ENCODE measurements at regions of chr12 and their contacts with region 1.

Region 1: DNA sequence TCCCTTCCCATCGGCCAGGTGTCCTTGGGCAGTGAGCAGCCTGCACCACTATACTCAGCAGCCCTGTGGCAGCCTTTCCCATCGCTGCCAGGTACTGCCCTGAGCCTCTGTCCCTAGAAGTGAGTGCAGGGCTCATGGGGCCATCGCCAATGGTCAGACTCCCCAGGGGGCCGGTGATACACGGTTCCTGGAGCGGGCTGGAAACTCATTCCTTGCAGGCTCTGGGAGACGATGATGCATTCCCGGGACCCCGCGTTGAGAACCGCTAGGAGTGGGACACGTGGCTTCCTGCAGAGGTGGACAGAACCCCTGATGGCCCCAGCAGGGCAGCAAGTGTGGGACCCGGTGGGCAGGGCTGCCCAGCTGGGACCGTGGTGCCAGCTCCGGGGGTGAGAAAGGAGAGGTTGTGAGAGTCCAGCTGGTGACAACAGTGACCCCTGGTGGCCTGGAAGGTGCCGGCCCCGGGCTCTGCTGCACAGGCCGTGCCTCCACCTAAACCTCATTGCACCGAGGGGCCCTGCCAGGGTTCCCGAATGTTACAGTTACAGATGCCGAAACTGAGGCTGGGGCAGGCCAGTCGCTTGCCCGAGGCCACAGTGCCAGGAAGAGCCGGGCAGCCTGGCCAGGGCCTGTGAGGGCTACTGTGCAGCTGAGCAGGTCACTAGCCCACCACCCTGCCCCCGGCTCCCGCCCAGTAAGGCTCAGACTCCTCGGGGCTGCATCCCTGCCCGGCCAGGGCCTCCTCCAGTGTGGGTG is 33.8 kb downstream of the FBRSL1 start:
- DNase-seq: peak; percentile 62 to 84 (median 73)
- ATAC-seq: peak; percentile 54 to 76 (median 65)
- H3K4me3 ChIP-seq: no peak overlapping the region
- H3K27ac ChIP-seq: no peak overlapping the region
- H3K4me1 ChIP-seq: peaks cover 0 to 64% (median 9%) of the 10 kb centered on the region in 12 donors
- H3K27me3 ChIP-seq: no peaks in the 10 kb centered on the region
- CTCF ChIP-seq: peak; percentile 72 to 90 (median 83)
- POLR2A ChIP-seq: no peak

Region 2: GRCh38 chr12:132414634-132415326 is 109.0 kb before region 1 on chr12:
- intact Hi-C with region 1: loop called in 9 of 10 experiments (anchors 1 to 5 kb)
- DNase-seq: peak; percentile 79 to 88 (median 83)
- ATAC-seq: peak; percentile 90 to 97 (median 94)
- H3K4me3 ChIP-seq: no peak overlapping the region
- H3K27ac ChIP-seq: no peak overlapping the region
- H3K4me1 ChIP-seq: peaks cover 0 to 9% (median 6%) of the 10 kb centered on the region in 12 donors
- H3K27me3 ChIP-seq: peaks cover 5 to 63% (median 31%) of the 10 kb centered on the region in 9 donors
- CTCF ChIP-seq: peak; percentile 89 to 97 (median 94)
- POLR2A ChIP-seq: no peak

Region 3: DNA sequence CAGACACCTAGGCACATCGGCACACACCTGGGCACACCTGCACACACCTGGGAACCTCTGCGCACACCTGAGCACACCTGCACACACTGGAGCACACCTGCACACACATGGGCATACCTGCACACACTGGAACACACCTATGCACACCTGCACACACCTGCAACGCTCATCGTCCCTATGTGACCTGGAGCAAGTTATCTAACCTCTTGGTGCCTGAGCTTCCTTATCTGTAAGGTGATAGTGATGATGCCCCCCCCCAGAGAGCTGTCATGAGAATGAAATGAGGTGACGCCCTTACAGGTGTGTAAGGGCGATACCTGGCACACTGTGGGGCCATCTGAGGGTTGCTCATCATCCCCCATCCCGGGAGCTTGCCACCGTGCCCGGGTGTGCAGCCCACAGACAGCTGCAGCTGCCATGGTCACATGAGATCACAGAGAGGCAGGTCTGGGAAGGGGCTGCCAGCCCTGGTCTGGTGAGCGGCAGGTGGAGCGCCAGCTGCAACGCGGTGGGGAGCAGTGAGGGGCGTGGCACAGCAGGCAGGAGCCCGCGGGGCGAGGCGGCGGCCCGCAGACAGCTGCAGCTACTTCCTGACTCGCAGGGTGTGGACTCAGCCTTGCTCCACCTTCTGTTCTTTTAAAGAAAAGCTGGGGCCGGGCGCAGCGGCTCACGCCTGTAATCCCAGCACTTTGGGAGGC is 93.7 kb before region 1 on chr12:
- intact Hi-C with region 1: loop called in 1 of 10 experiments (anchors 10 kb)
- DNase-seq: no peak
- ATAC-seq: peak in 3 of 4 donors; percentile 47 to 49 (median 48)
- H3K4me3 ChIP-seq: peak overlapping the region in 1 of 12 donors; percentile 17
- H3K27ac ChIP-seq: no peak overlapping the region
- H3K4me1 ChIP-seq: peaks cover 0 to 24% (median 6%) of the 10 kb centered on the region in 12 donors
- H3K27me3 ChIP-seq: peaks cover 4 to 79% (median 25%) of the 10 kb centered on the region in 9 donors
- CTCF ChIP-seq: no peak
- POLR2A ChIP-seq: no peak

Region 4: GRCh38 chr12:132560614-132561426 is 37.1 kb after region 1 on chr12:
- intact Hi-C with region 1: no loop called
- DNase-seq: no peak
- ATAC-seq: peak in 3 of 4 donors; percentile 3 to 28 (median 13)
- H3K4me3 ChIP-seq: peak overlapping the region; percentile 33 to 78 (median 60)
- H3K27ac ChIP-seq: no peak overlapping the region
- H3K4me1 ChIP-seq: peaks cover 0 to 29% (median 13%) of the 10 kb centered on the region in 12 donors
- H3K27me3 ChIP-seq: peaks cover 0 to 18% (median 0%) of the 10 kb centered on the region in 9 donors
- CTCF ChIP-seq: peak; percentile 29 to 60 (median 52)
- POLR2A ChIP-seq: no peak

Measured in heart left ventricle (tissue), 16 donors.